ENCODE measurements at regions of chr12 and their contacts with region 1.

Region 1: DNA sequence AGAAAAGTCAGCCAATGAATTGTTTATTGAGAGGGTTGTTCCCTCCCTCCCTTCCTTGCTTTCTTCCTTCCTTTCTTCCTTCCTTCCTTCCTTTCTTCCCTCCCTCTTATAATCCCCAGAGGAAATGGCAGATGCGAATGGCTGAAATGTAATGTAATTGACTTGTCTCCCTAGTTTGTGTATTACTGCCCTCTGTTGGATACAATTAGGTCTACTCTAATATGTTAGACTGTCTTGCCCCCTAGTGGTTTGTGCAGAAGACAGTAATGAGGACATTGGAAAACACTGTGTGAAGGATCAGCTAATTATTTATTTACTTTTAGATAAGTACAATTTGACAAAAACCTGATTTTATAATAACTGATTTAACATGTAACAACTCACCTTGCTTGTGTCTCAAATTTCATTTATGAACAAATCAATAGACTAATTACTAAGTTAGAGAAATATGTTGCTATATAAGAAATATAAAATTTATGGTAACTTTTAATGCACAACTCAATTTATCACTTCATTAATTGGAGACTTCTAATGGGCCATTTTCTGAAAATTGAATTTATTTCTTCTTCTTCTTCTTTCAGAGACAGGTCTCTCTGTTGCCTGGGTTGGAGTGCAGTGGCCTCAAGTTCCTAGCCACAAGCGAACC is 229.8 kb upstream of the LRIG3 start:
- DNase-seq: no peak
- H3K4me3 ChIP-seq: no peak overlapping the region
- H3K27ac ChIP-seq: no peak overlapping the region
- H3K4me1 ChIP-seq: peaks cover 0 to 5% (median 0%) of the 10 kb centered on the region in 4 donors
- H3K27me3 ChIP-seq: no peaks in the 10 kb centered on the region
- CTCF ChIP-seq: peak; percentile 87 to 93 (median 91)
- EP300 ChIP-seq: no peak
- POLR2A ChIP-seq: no peak

Region 2: GRCh38 chr12:59113831-59114615 is 36.1 kb before region 1 on chr12:
- intact Hi-C with region 1: loop called (anchors 1 kb)
- DNase-seq: no peak
- H3K4me3 ChIP-seq: no peak overlapping the region
- H3K27ac ChIP-seq: peak overlapping the region in 1 of 4 donors; percentile 16
- H3K4me1 ChIP-seq: peaks cover 3 to 8% (median 6%) of the 10 kb centered on the region in 4 donors
- H3K27me3 ChIP-seq: no peaks in the 10 kb centered on the region
- CTCF ChIP-seq: peak; percentile 77 to 92 (median 85)
- EP300 ChIP-seq: no peak
- POLR2A ChIP-seq: no peak